ENCODE measurements at regions of chr12 and their contacts with region 1.

Region 1: GRCh38 chr12:54005853-54006686 is 2.7 kb upstream of the HOXC8 start:
- DNase-seq: peak; percentile 42 to 92 (median 77)
- ATAC-seq: peak; percentile 74 to 82 (median 78)
- H3K4me3 ChIP-seq: peak overlapping the region; percentile 43 to 73
- H3K4me3 Mint-ChIP-seq: peak overlapping the region; percentile 68 to 89 (median 71)
- H3K27ac ChIP-seq: no peak overlapping the region
- H3K27ac Mint-ChIP-seq: peak overlapping the region in 1 of 2 donors; percentile 43
- H3K4me1 ChIP-seq: peaks cover 0 to 34% of the 10 kb centered on the region in 2 experiments
- H3K4me1 Mint-ChIP-seq: peaks cover 24 to 33% (median 31%) of the 10 kb centered on the region in 3 donors
- H3K27me3 ChIP-seq: peaks cover 12 to 99% of the 10 kb centered on the region in 2 experiments
- H3K27me3 Mint-ChIP-seq: peaks cover 79 to 93% of the 10 kb centered on the region in 2 donors

Region 2: DNA sequence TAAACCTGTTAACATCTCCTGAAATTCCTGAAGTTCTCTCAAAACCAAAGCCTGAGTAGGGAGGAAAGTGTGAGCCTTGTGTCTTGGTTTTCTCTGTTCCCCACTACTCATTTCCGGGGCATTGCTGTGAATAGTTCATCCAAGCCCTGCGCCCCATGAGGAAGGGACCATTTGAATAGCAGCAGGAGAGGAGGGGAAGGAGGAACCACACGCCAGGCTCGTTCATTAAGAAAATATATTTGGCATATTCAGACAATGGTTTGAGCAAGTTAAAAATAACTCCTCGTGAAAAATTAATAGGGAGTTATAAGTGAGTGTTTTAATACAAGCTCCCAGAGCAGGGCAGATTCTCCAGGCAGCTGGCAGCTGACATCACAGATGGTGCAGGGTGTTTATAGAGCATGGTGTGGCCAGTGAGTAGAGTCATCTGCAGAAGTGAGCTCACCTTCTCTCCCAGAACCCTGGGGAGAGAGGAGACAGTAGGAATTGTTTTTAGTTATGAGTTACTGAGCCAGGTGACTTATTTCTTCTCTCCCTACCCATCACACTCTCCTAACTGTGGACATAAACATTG is 224.8 kb before region 1 on chr12:
- CTCF ChIA-PET with region 1: no interaction called
- POLR2A ChIA-PET with region 1: no interaction called
- DNase-seq: no peak
- ATAC-seq: no peak
- H3K4me3 ChIP-seq: no peak overlapping the region
- H3K4me3 Mint-ChIP-seq: no peak overlapping the region
- H3K27ac ChIP-seq: no peak overlapping the region
- H3K27ac Mint-ChIP-seq: no peak overlapping the region
- H3K4me1 ChIP-seq: no peaks in the 10 kb centered on the region
- H3K4me1 Mint-ChIP-seq: no peaks in the 10 kb centered on the region
- H3K27me3 ChIP-seq: peaks cover 14 to 27% of the 10 kb centered on the region in 2 experiments
- H3K27me3 Mint-ChIP-seq: peaks cover 59 to 62% of the 10 kb centered on the region in 2 donors

Region 3: GRCh38 chr12:53938326-53939140 is 67.5 kb before region 1 on chr12 and contains the start of gene HOXC13:
- CTCF ChIA-PET with region 1: no interaction called
- POLR2A ChIA-PET with region 1: no interaction called
- DNase-seq: peak in 4 of 35 experiments; percentile 17 to 36 (median 23)
- ATAC-seq: peak in 2 of 4 experiments; percentile 17 to 58
- H3K4me3 ChIP-seq: no peak within 1 kb of the TSS
- H3K4me3 Mint-ChIP-seq: peak within 1 kb of the TSS in 2 of 3 donors; percentile 6 to 48
- H3K27ac ChIP-seq: no peak within 1 kb of the TSS
- H3K27ac Mint-ChIP-seq: peak within 1 kb of the TSS in 1 of 2 donors; percentile 31
- H3K4me1 ChIP-seq: peaks cover 0 to 23% of the 10 kb centered on the region in 2 experiments
- H3K4me1 Mint-ChIP-seq: peaks cover 15 to 28% (median 18%) of the 10 kb centered on the region in 3 donors
- H3K27me3 ChIP-seq: peaks cover 29 to 78% of the 10 kb centered on the region in 2 experiments
- H3K27me3 Mint-ChIP-seq: peaks cover 84 to 87% of the 10 kb centered on the region in 2 donors
- total RNA-seq, gene HOXC13: 0.12 TPM in 1 of 5 donors, not detected in the others

Region 4: GRCh38 chr12:54017878-54018467 is 11.9 kb after region 1 on chr12:
- CTCF ChIA-PET with region 1: interaction called in 1 of 2 experiments, 11 read pairs
- POLR2A ChIA-PET with region 1: no interaction called
- DNase-seq: peak; percentile 41 to 85 (median 68)
- ATAC-seq: peak; percentile 82 to 85 (median 84)
- H3K4me3 ChIP-seq: peak overlapping the region; percentile 42 to 60
- H3K4me3 Mint-ChIP-seq: peak overlapping the region; percentile 75 to 79 (median 79)
- H3K27ac ChIP-seq: peak overlapping the region; percentile 53
- H3K27ac Mint-ChIP-seq: no peak overlapping the region
- H3K4me1 ChIP-seq: peaks cover 5 to 43% of the 10 kb centered on the region in 2 experiments
- H3K4me1 Mint-ChIP-seq: peaks cover 20 to 32% (median 27%) of the 10 kb centered on the region in 3 donors
- H3K27me3 ChIP-seq: peaks cover 17 to 93% of the 10 kb centered on the region in 2 experiments
- H3K27me3 Mint-ChIP-seq: peaks cover 55 to 86% of the 10 kb centered on the region in 2 donors

Region 5: GRCh38 chr12:54191550-54192022 is 185.5 kb after region 1 on chr12:
- CTCF ChIA-PET with region 1: interaction called, 5 to 24 read pairs
- POLR2A ChIA-PET with region 1: interaction called in 1 of 2 experiments, 3 read pairs
- DNase-seq: peak; percentile 49 to 94 (median 74)
- ATAC-seq: peak; percentile 53 to 65 (median 57)
- H3K4me3 ChIP-seq: no peak overlapping the region
- H3K4me3 Mint-ChIP-seq: no peak overlapping the region
- H3K27ac ChIP-seq: no peak overlapping the region
- H3K27ac Mint-ChIP-seq: peak overlapping the region in 1 of 2 donors; percentile 44
- H3K4me1 ChIP-seq: peaks cover 2 to 21% of the 10 kb centered on the region in 2 experiments
- H3K4me1 Mint-ChIP-seq: peaks cover 18 to 31% (median 24%) of the 10 kb centered on the region in 3 donors
- H3K27me3 ChIP-seq: peaks cover 3 to 56% of the 10 kb centered on the region in 2 experiments
- H3K27me3 Mint-ChIP-seq: peaks cover 37 to 54% of the 10 kb centered on the region in 2 donors

Region 6: DNA sequence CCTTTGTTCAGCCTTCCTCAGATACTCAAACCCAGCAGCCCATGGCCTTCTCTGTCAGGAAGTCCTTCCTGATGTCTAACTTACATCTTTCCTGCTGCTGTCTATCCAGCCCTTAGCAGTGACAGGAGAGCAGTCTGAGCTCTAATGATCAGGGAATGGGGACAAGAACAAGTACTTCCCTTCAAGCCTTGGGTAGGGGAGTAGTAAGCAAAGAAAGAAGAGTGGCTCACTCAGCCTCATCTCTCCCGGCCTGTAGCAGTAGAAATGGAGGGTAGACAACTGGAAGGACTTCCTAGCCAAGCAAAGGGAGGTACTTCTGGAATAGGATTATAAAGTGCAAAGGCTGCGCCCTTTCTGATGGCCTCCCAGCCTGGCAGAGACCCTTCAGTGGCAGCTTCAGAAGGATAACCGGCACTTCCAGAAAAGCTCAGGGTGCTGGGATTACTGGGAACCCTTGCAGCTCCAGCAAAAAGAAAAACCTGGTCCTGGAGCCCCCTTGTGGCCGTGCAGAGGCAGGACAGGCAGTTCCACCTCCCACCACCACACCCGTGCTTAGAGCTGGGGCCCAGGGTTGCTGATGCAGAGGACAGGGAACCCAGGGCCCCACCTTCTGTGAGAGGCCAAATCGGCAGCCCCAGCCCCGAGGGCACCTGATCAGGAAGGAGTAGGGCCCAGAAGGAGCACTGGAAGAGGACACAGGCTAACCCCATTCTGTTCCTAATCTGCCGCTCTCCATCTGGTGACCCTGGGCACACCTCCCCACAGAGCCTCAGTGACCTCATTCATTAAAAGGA is 195.1 kb after region 1 on chr12:
- CTCF ChIA-PET with region 1: interaction called, 6 to 41 read pairs
- POLR2A ChIA-PET with region 1: no interaction called
- DNase-seq: peak; percentile 24 to 78 (median 56)
- ATAC-seq: peak; percentile 80 to 95 (median 85)
- H3K4me3 ChIP-seq: no peak overlapping the region
- H3K4me3 Mint-ChIP-seq: no peak overlapping the region
- H3K27ac ChIP-seq: no peak overlapping the region
- H3K27ac Mint-ChIP-seq: peak overlapping the region in 1 of 2 donors; percentile 34
- H3K4me1 ChIP-seq: no peaks in the 10 kb centered on the region
- H3K4me1 Mint-ChIP-seq: no peaks in the 10 kb centered on the region
- H3K27me3 ChIP-seq: peaks cover 3 to 89% of the 10 kb centered on the region in 2 experiments
- H3K27me3 Mint-ChIP-seq: peaks cover 68 to 91% of the 10 kb centered on the region in 2 donors

Region 7: GRCh38 chr12:54207484-54208294 is 201.6 kb after region 1 on chr12:
- CTCF ChIA-PET with region 1: interaction called, 6 to 30 read pairs
- POLR2A ChIA-PET with region 1: no interaction called
- DNase-seq: peak; percentile 22 to 84 (median 66)
- ATAC-seq: peak; percentile 87 to 90 (median 89)
- H3K4me3 ChIP-seq: no peak overlapping the region
- H3K4me3 Mint-ChIP-seq: no peak overlapping the region
- H3K27ac ChIP-seq: no peak overlapping the region
- H3K27ac Mint-ChIP-seq: peak overlapping the region in 1 of 2 donors; percentile 64
- H3K4me1 ChIP-seq: peaks cover 0 to 6% of the 10 kb centered on the region in 2 experiments
- H3K4me1 Mint-ChIP-seq: peaks cover 3 to 8% (median 3%) of the 10 kb centered on the region in 3 donors
- H3K27me3 ChIP-seq: peaks cover 2 to 68% of the 10 kb centered on the region in 2 experiments
- H3K27me3 Mint-ChIP-seq: peaks cover 27 to 50% of the 10 kb centered on the region in 2 donors

Measured in T-cell (primary cell).